Natural killer cell (primary cell): ENCODE measurements at regions of chr5 and their contacts with region 1.

Region 1: DNA sequence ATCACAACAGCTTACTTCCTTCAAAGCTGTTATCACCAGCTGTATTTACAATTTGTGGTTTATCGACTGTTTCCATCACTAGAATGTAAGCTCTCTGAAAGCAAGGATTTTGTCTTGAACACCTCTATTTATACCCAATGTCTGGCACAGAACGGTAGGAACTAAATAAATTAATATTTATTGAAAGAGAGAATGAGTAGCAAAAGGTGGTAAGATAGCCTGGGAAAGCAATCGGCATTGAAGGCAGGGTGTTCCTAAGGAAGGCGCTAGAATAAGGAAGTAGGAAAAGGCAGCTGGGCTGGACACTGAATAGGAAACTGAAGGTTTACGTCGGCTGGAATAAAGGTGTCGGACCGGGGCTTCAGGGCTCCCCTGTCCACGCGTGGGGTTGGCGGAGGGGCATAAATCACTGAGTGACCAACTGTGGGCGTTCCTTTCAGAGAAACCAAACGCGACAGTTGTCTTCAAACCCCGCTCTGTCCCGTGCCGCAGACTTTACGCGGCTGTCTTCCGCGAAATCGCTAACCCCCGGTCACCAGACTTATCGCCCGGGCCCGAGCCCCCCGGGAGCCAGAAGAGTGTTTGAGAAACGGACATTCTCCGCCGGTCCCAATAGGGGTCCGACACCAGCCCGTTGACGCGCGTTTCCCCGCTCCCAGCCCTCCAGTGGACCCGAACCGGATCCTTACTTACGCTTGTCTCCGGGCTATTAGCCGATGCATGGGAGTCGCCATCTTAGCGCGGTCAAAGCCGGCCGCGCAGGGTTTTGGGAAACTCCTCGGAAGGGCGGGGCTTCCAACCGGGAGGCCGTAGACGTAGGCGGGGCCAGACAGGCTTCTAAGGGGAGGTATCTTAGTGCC is at the start of gene ZCCHC10:
- DNase-seq: peak; percentile 85 to 95
- ATAC-seq: peak; percentile 98 to 99 (median 99)
- H3K4me3 ChIP-seq: peak within 1 kb of the TSS; percentile 99
- H3K4me3 Mint-ChIP-seq: peak within 1 kb of the TSS; percentile 97
- H3K27ac ChIP-seq: peak within 1 kb of the TSS; percentile 94
- H3K27ac Mint-ChIP-seq: peak within 1 kb of the TSS; percentile 96
- H3K4me1 ChIP-seq: peaks cover 6% of the 10 kb centered on the region
- H3K4me1 Mint-ChIP-seq: peaks cover 16 to 21% of the 10 kb centered on the region in 2 donors
- H3K27me3 ChIP-seq: no peaks in the 10 kb centered on the region
- H3K27me3 Mint-ChIP-seq: no peaks in the 10 kb centered on the region
- CTCF ChIP-seq: no peak
- total RNA-seq, gene ZCCHC10: 18.4 to 20.5 (median 20.4) TPM

Region 2: DNA sequence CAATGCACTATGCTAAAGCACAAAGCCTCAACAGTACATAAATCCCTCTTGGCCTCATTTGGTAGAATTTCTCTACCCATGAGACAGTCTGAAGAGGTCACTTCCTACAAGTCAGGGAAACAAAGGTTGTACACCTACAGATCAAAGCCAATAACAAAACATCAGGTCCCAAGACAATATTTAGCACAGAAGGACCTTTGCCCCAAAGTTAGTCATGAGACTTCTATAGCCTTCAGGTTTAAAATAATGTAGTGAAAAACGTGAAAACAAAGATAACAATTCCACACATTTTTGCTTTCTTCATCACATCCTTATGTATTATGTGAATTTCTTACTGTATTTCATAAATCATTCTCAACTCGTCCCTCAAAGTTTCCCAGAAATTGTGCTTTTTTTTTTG is 78.4 kb before region 1 on chr5:
- intact Hi-C with region 1: no loop called
- DNase-seq: no peak
- ATAC-seq: no peak
- H3K4me3 ChIP-seq: no peak overlapping the region
- H3K4me3 Mint-ChIP-seq: no peak overlapping the region
- H3K27ac ChIP-seq: no peak overlapping the region
- H3K27ac Mint-ChIP-seq: peak overlapping the region; percentile 29 to 43
- H3K4me1 ChIP-seq: peaks cover 5% of the 10 kb centered on the region
- H3K4me1 Mint-ChIP-seq: peaks cover 55 to 66% of the 10 kb centered on the region in 2 donors
- H3K27me3 ChIP-seq: no peaks in the 10 kb centered on the region
- H3K27me3 Mint-ChIP-seq: no peaks in the 10 kb centered on the region
- CTCF ChIP-seq: no peak

Region 3: DNA sequence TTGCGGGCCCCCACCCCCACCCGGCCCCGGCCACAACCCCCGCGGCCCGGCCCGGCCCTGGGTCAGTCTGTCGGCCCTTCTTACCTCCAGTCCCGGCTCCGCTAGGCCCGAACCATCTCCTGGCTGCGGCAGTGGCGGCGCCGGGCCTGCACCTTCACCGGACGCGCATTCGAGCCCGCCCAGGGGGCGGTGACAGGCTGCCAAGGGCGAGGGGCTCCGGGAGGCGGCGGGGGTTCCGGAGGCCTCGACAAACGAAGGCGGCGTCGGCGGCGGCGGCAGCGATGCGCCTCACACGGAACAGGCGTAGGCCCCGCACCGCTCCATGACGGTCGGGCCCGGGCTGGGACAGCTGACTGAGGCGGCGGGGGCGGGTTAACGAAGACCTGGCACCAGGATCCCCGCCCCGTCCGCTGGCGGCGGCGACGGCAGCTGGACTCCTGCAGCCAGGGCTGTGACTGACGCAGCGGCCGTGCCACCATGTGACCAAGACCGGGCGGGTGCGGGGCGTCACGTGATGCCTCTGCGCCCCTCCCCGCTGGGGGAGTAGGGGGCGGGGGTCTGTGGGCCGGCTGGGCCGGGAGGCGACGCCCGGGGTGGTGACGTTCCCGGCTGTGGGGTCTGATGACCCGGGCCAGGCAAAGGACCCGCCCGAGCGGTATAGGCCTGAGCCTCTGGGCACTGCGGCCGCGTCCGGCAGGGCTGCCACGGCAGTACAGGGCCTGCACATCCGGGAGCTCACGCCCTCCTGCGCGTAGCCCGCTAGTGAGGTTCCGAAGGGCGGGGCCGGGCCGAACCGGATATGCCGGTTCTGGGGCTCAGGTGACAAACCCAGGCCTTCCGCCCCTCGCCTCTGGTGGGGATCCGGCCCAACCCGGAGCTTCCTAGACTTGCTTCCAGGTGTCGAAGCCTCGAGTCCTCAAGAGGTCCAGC is 62.6 kb before region 1 on chr5 and contains the start of gene AFF4:
- intact Hi-C with region 1: loop called (anchors 1 kb)
- DNase-seq: peak; percentile 89 to 91
- ATAC-seq: peak; percentile 85 to 94 (median 88)
- H3K4me3 ChIP-seq: peak within 1 kb of the TSS; percentile 64
- H3K4me3 Mint-ChIP-seq: peak within 1 kb of the TSS; percentile 97
- H3K27ac ChIP-seq: peak within 1 kb of the TSS; percentile 94
- H3K27ac Mint-ChIP-seq: peak within 1 kb of the TSS; percentile 90 to 93
- H3K4me1 ChIP-seq: peaks cover 13% of the 10 kb centered on the region
- H3K4me1 Mint-ChIP-seq: peaks cover 31% of the 10 kb centered on the region in 2 donors
- H3K27me3 ChIP-seq: no peaks in the 10 kb centered on the region
- H3K27me3 Mint-ChIP-seq: no peaks in the 10 kb centered on the region
- CTCF ChIP-seq: no peak
- total RNA-seq, gene AFF4: 87.5 to 98.1 (median 90.8) TPM

Region 4: DNA sequence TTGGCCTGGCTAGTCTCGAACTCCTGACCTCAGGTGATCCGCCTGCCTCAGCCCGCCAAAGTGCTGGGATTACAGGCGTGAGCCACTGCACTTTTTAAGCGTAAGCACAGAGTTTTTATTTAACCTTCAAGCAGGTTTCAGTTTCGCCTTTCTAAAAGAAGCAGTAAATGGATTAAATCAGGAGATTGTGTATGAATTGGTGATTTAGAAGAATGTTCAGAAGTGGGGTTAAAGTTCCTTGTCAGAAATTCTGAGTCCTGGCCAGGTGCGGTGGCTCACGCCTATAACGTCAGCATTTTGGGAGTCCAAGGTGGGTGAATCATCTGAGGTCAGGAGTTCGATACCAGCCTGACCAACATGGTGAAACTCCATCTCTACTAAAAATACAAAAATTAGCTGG is 37.9 kb after region 1 on chr5:
- intact Hi-C with region 1: no loop called
- DNase-seq: no peak
- ATAC-seq: no peak
- H3K4me3 ChIP-seq: no peak overlapping the region
- H3K4me3 Mint-ChIP-seq: no peak overlapping the region
- H3K27ac ChIP-seq: no peak overlapping the region
- H3K27ac Mint-ChIP-seq: peak overlapping the region in 1 of 2 donors; percentile 28
- H3K4me1 ChIP-seq: peaks cover 4% of the 10 kb centered on the region
- H3K4me1 Mint-ChIP-seq: peaks cover 33 to 40% of the 10 kb centered on the region in 2 donors
- H3K27me3 ChIP-seq: no peaks in the 10 kb centered on the region
- H3K27me3 Mint-ChIP-seq: no peaks in the 10 kb centered on the region
- CTCF ChIP-seq: no peak

Region 5: DNA sequence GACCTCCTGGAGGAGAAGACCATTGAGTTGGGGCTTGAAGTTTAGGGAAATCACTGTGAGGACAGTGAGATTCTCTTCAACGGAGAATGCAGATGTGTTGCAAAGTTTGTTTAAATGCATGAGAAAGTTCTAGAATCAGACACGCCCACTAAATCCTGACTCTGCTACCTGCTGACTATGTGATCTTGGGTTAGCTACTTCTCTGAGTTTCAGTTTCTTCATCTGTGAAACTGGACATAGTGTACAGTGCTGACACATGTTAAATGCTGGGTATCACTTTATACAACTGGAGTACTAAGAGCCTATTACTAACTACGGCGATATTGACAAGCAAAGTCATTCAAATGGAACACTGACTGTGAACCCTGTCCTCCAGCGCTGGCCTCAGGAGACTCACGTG is 281.2 kb after region 1 on chr5:
- intact Hi-C with region 1: no loop called
- DNase-seq: no peak
- ATAC-seq: no peak
- H3K4me3 ChIP-seq: no peak overlapping the region
- H3K4me3 Mint-ChIP-seq: no peak overlapping the region
- H3K27ac ChIP-seq: no peak overlapping the region
- H3K27ac Mint-ChIP-seq: no peak overlapping the region
- H3K4me1 ChIP-seq: no peaks in the 10 kb centered on the region
- H3K4me1 Mint-ChIP-seq: no peaks in the 10 kb centered on the region
- H3K27me3 ChIP-seq: no peaks in the 10 kb centered on the region
- H3K27me3 Mint-ChIP-seq: peaks cover 0 to 3% of the 10 kb centered on the region in 2 donors
- CTCF ChIP-seq: no peak